ENCODE measurements at regions of chr2 and their contacts with region 1.

Region 1: DNA sequence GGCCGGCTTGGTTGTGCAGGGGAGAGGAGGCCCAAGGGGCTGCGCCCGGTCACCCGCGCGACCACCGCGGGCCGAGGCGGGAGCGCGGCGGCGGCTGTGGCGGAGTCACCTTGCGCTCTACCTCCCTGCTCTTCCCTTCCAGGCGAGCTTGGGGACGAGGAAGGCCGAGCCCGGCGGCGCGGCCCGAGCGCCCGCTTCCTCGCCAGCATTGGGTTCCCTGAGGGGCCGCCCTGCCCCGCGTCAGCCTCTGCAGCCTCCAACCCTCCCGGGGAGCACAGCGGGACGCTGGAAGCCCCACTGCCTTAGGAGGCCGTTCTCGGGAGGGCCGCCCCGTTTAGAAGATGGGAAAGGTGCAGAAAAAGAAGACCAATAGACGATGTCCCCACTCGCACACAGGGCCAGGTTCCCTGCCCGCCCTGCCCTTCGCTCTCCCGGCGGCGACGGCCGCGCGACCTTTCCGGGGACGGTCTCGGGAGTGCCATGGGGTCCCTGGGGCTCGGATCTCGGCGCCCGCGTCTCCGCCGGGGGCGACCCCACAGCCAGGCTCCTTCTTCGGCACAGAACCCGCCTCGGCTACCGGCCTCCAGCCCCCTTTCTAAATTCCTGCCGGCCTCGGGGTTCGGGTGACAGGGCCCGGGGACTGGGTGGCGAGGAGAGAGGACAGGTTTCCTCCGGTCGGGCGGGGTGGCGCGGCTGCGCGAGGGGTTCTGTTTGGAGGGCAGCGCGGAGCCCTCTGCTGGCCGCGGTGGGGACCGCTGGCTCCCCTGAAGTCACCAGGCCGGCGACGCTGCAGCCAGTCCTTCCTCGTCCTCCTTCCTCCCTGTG is 85.5 kb downstream of the HS6ST1 start:
- DNase-seq: peak; percentile 29
- H3K4me3 ChIP-seq: peak overlapping the region; percentile 70
- H3K27ac ChIP-seq: no peak overlapping the region
- H3K27me3 ChIP-seq: no peaks in the 10 kb centered on the region
- CTCF ChIP-seq: peak; percentile 90

Region 2: GRCh38 chr2:128178650-128179460 is 54.3 kb before region 1 on chr2:
- CTCF ChIA-PET with region 1: interaction called, 11 read pairs
- POLR2A ChIA-PET with region 1: interaction called, 3 read pairs
- DNase-seq: peak; percentile 67
- H3K4me3 ChIP-seq: no peak overlapping the region
- H3K27ac ChIP-seq: peak overlapping the region; percentile 83
- H3K27me3 ChIP-seq: no peaks in the 10 kb centered on the region
- CTCF ChIP-seq: peak; percentile 92